ENCODE measurements at regions of chr9 and their contacts with region 1.

Region 1: DNA sequence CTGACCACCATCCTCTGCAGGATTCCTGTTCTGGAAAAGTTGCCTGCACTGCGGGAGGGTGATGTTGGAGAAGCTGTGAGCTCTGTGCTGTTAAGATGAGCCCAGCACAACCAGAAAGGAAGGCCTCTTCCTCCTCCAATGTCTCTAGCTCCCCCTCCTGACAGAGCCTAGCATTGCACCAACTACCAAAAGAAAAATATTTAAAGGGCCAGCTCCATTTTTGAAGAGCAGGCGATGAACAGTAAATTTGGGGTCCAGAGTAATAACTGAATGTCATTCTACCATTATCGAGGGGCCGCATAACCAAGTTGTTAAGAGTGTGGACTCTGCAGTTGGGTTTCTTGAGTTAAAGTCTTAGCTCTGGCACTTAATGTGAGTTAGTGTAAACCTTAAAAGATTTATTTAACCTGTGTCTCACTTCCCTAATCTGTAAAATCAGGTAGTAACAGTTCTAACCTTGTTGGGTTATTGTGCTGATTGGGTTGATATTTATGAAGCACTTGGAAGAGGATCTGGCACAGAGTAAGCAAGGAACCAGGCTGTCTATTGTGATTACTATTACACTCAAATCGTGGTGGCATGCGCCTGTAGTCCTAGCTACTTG is 3.9 kb downstream of the TEX53 start:
- DNase-seq: peak; percentile 89
- H3K4me3 Mint-ChIP-seq: no peak overlapping the region
- H3K27ac Mint-ChIP-seq: peak overlapping the region; percentile 61
- H3K4me1 Mint-ChIP-seq: peaks cover 22% of the 10 kb centered on the region
- H3K27me3 Mint-ChIP-seq: no peaks in the 10 kb centered on the region

Region 2: DNA sequence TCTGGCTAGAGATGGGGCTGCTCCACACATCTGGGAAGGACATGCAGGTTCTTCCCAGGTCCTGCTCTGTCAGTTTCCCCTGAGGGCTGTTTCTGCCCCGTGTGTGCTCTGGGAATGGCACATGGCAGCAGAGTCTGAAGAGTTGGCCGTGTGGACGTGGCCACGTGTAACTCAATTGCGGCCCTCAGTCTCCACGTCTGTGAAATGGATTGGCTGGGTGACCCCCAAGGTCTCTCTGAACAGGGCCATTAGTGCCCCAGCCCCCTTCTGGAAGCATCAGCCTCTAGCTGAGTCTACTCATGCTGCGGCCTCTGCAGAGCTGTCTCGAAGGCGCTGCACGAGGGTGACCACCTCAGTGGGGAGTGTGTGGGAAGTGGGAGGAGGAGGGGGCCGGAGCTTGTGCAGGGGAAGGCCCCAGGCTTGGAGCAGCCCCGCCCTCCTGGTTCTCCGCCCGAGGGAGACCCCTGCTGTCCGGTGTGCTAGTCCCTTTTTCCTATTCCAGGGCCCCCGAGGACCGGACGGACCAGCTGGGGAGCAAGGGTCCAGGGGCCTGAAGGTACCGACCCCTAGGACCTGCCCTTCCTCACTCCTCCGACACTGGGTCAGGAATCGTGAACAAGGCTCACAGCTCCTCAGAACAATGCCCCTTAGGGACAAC is 389.7 kb before region 1 on chr9:
- CTCF ChIA-PET with region 1: no interaction called
- DNase-seq: no peak
- H3K4me3 Mint-ChIP-seq: no peak overlapping the region
- H3K27ac Mint-ChIP-seq: no peak overlapping the region
- H3K4me1 Mint-ChIP-seq: no peaks in the 10 kb centered on the region
- H3K27me3 Mint-ChIP-seq: no peaks in the 10 kb centered on the region

Region 3: GRCh38 chr9:114397848-114398605 is 255.6 kb before region 1 on chr9:
- CTCF ChIA-PET with region 1: interaction called, 206 read pairs
- DNase-seq: peak; percentile 98
- H3K4me3 Mint-ChIP-seq: peak overlapping the region; percentile 89
- H3K27ac Mint-ChIP-seq: peak overlapping the region; percentile 90
- H3K4me1 Mint-ChIP-seq: peaks cover 51% of the 10 kb centered on the region
- H3K27me3 Mint-ChIP-seq: peaks cover 16% of the 10 kb centered on the region

Region 4: DNA sequence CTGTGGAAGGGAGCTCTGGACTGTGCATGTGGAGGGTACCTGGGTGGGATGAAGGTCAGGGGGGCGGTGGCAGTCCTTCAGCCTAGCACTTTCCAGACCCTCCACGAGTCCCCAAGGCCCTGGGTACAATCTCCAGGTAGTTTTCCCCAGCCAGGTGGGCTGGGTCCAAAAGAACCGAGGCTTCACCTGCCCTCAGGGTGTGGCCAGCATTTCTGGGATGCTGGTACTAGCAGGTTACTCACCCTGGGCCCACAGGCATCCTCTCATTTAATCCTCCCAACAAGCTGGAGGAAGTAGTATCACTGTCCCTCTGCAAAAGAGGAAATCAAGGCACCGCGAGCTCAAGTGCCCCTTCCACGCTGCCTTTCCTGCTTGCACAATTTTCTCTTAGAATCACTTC is 233.1 kb before region 1 on chr9:
- CTCF ChIA-PET with region 1: interaction called, 17 read pairs
- DNase-seq: no peak
- H3K4me3 Mint-ChIP-seq: no peak overlapping the region
- H3K27ac Mint-ChIP-seq: peak overlapping the region; percentile 25
- H3K4me1 Mint-ChIP-seq: peaks cover 16% of the 10 kb centered on the region
- H3K27me3 Mint-ChIP-seq: peaks cover 29% of the 10 kb centered on the region

Region 5: GRCh38 chr9:114505187-114506081 is 148.2 kb before region 1 on chr9 and contains the start of gene WHRN:
- CTCF ChIA-PET with region 1: interaction called, 50 read pairs
- DNase-seq: peak; percentile 94
- H3K4me3 Mint-ChIP-seq: peak within 1 kb of the TSS; percentile 75
- H3K27ac Mint-ChIP-seq: peak within 1 kb of the TSS; percentile 24
- H3K4me1 Mint-ChIP-seq: peaks cover 13% of the 10 kb centered on the region
- H3K27me3 Mint-ChIP-seq: peaks cover 97% of the 10 kb centered on the region

Region 6: GRCh38 chr9:114587385-114588202 is 66.1 kb before region 1 on chr9 and contains the start of gene ATP6V1G1:
- CTCF ChIA-PET with region 1: interaction called, 166 read pairs
- DNase-seq: peak; percentile 100
- H3K4me3 Mint-ChIP-seq: peak within 1 kb of the TSS; percentile 97
- H3K27ac Mint-ChIP-seq: peak within 1 kb of the TSS; percentile 92
- H3K4me1 Mint-ChIP-seq: peaks cover 45% of the 10 kb centered on the region
- H3K27me3 Mint-ChIP-seq: peaks cover 7% of the 10 kb centered on the region

Region 7: DNA sequence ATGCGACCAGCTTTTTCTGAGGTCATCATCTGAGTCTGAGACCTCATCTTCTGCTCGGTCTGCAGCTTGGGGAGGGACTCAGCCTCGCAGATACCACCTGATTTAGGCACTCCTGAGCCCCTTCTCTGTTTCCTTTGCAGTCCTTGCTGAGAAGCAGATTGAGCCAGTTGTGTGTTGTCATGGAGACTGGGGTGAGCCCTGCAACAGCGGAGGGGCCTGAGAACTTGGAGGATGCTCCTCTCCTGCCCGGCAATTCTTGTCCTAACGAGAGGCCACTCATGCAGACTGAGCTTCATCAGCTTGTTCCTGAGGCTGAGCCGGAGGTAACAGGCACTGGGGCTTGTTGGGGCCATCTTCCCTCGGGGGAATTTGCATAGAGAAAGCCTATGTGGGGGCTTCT is 15.3 kb before region 1 on chr9:
- CTCF ChIA-PET with region 1: interaction called, 10 read pairs
- DNase-seq: no peak
- H3K4me3 Mint-ChIP-seq: no peak overlapping the region
- H3K27ac Mint-ChIP-seq: no peak overlapping the region
- H3K4me1 Mint-ChIP-seq: no peaks in the 10 kb centered on the region
- H3K27me3 Mint-ChIP-seq: no peaks in the 10 kb centered on the region